CD8-positive, alpha-beta T cell (primary cell): ENCODE measurements at regions of chr16 and their contacts with region 1.

Region 1: DNA sequence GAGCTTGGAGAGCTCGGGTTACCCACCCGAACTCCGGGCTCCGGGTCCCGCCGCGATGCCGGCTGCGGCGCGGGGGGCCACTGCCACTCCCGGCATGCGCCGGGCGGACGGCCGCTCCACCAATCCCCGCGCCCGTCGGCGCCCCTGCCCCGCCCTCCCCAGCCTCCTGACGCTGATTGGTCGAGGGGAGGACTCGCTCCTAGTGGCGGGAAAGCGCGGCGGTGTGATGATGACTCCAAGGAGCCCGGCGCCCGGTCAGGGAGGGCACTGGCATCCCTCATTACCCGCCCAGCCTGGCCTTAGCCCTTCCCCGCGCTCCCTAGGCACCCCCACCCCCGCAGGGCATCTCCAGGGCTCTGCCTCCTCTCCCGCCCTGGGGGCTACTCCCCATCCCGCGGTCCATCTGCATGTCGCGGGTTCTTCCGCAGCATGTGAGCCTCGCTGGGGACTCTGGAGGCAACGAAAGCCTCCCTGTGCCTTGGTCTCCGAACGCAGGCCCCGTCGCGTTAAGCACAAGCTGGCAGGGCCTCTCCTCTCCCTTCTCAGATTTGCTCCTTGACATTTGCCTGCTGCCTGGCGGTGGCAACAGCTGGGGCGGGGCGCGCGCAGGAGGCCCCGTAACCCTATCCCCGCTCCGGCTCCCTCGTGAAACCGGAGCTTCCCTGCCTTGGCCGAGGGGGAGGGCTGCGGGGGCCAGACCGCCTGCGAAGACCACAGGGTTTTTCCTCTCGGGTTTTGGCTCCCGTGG is 1.7 kb downstream of the ATP2A1 start:
- DNase-seq: peak; percentile 78 to 91 (median 89)
- ATAC-seq: peak; percentile 97
- H3K4me3 ChIP-seq: peak overlapping the region; percentile 85 to 88
- H3K4me3 Mint-ChIP-seq: peak overlapping the region; percentile 86
- H3K27ac ChIP-seq: peak overlapping the region in 1 of 2 experiments; percentile 39
- H3K27ac Mint-ChIP-seq: no peak overlapping the region
- H3K4me1 ChIP-seq: peaks cover 9% of the 10 kb centered on the region
- H3K4me1 Mint-ChIP-seq: peaks cover 16% of the 10 kb centered on the region
- H3K27me3 ChIP-seq: no peaks in the 10 kb centered on the region
- H3K27me3 Mint-ChIP-seq: peaks cover 14% of the 10 kb centered on the region
- CTCF ChIP-seq: no peak

Region 2: GRCh38 chr16:28823872-28824716 is 55.9 kb before region 1 on chr16:
- CTCF ChIA-PET with region 1: no interaction called
- POLR2A ChIA-PET with region 1: no interaction called
- intact Hi-C with region 1: loop called in 1 of 2 experiments (anchors 1 kb)
- DNase-seq: peak; percentile 88 to 97 (median 95)
- ATAC-seq: peak; percentile 67
- H3K4me3 ChIP-seq: peak overlapping the region; percentile 74 to 94
- H3K4me3 Mint-ChIP-seq: peak overlapping the region; percentile 97
- H3K27ac ChIP-seq: peak overlapping the region; percentile 93 to 94
- H3K27ac Mint-ChIP-seq: peak overlapping the region; percentile 99
- H3K4me1 ChIP-seq: peaks cover 30% of the 10 kb centered on the region
- H3K4me1 Mint-ChIP-seq: peaks cover 43% of the 10 kb centered on the region
- H3K27me3 ChIP-seq: no peaks in the 10 kb centered on the region
- H3K27me3 Mint-ChIP-seq: no peaks in the 10 kb centered on the region
- CTCF ChIP-seq: peak; percentile 21

Region 3: DNA sequence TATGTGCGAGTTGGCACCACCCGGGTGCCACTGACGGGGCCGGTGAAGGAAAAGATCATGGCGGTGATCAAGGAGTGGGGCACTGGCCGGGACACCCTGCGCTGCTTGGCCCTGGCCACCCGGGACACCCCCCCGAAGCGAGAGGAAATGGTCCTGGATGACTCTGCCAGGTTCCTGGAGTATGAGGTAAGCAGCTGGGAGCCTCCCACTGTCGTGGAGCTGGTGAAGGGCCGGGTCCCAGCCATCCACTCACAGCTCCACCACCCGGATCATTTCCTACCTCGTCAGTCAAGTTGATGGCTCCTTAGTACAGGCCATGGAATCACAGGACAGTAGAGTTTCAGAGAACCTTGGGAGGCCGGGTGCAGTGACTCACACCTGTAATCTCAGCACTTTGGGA is 18.3 kb after region 1 on chr16:
- CTCF ChIA-PET with region 1: no interaction called
- POLR2A ChIA-PET with region 1: no interaction called
- intact Hi-C with region 1: no loop called
- DNase-seq: no peak
- ATAC-seq: no peak
- H3K4me3 ChIP-seq: no peak overlapping the region
- H3K4me3 Mint-ChIP-seq: no peak overlapping the region
- H3K27ac ChIP-seq: no peak overlapping the region
- H3K27ac Mint-ChIP-seq: no peak overlapping the region
- H3K4me1 ChIP-seq: no peaks in the 10 kb centered on the region
- H3K4me1 Mint-ChIP-seq: peaks cover 4% of the 10 kb centered on the region
- H3K27me3 ChIP-seq: no peaks in the 10 kb centered on the region
- H3K27me3 Mint-ChIP-seq: no peaks in the 10 kb centered on the region
- CTCF ChIP-seq: no peak